ENCODE measurements at regions of chr1 and their contacts with region 1.

Region 1: GRCh38 chr1:28581536-28582247 is 10.4 kb upstream of the RAB42 start:
- DNase-seq: peak; percentile 88
- ATAC-seq: peak; percentile 88
- H3K4me3 ChIP-seq: peak overlapping the region; percentile 95 to 99 (median 96)
- H3K27ac ChIP-seq: peak overlapping the region; percentile 71
- H3K4me1 ChIP-seq: peaks cover 45% of the 10 kb centered on the region
- H3K27me3 ChIP-seq: peaks cover 0 to 3% of the 10 kb centered on the region in 2 experiments; a peak in 1 of 5 replicates
- CTCF ChIP-seq: peak; percentile 23
- EP300 ChIP-seq: no peak
- POLR2A ChIP-seq: peak; percentile 100
- RAD21 ChIP-seq: peak; percentile 62

Region 2: DNA sequence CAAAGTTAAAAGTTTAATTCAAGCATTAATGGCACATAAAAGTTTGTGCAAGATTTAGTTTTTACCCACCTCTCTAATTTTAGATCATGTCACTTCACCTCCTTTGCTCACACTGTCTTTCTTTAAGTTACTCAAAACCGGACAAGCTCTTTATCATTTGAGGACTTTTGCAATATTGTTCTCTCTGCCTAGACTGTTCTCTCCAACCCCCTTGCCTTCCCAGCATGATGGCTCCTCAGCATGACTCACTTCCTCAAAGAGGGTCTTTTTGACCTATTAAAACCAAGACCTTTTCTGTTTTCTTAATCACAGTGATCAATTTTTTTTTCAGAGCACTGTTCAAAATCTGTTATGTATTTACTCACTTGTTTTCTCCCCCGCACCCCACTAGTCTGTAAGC is 560.6 kb before region 1 on chr1:
- CTCF ChIA-PET with region 1: no interaction called
- POLR2A ChIA-PET with region 1: no interaction called
- in situ Hi-C with region 1: no loop called
- intact Hi-C with region 1: no loop called
- DNase-seq: no peak
- ATAC-seq: no peak
- H3K4me3 ChIP-seq: no peak overlapping the region
- H3K27ac ChIP-seq: no peak overlapping the region
- H3K4me1 ChIP-seq: no peaks in the 10 kb centered on the region
- H3K27me3 ChIP-seq: no peaks in the 10 kb centered on the region
- CTCF ChIP-seq: no peak
- EP300 ChIP-seq: no peak
- POLR2A ChIP-seq: no peak
- RAD21 ChIP-seq: no peak

Region 3: GRCh38 chr1:28248283-28249012 is 333.2 kb before region 1 on chr1:
- CTCF ChIA-PET with region 1: no interaction called
- POLR2A ChIA-PET with region 1: interaction called, 13 read pairs
- in situ Hi-C with region 1: loop called (anchors 25 kb)
- intact Hi-C with region 1: no loop called
- DNase-seq: peak; percentile 61
- ATAC-seq: peak; percentile 44
- H3K4me3 ChIP-seq: peak overlapping the region; percentile 54 to 78 (median 75)
- H3K27ac ChIP-seq: peak overlapping the region; percentile 75
- H3K4me1 ChIP-seq: peaks cover 53% of the 10 kb centered on the region
- H3K27me3 ChIP-seq: no peaks in the 10 kb centered on the region
- CTCF ChIP-seq: peak; percentile 89
- EP300 ChIP-seq: no peak
- POLR2A ChIP-seq: no peak
- RAD21 ChIP-seq: peak; percentile 83

Region 4: DNA sequence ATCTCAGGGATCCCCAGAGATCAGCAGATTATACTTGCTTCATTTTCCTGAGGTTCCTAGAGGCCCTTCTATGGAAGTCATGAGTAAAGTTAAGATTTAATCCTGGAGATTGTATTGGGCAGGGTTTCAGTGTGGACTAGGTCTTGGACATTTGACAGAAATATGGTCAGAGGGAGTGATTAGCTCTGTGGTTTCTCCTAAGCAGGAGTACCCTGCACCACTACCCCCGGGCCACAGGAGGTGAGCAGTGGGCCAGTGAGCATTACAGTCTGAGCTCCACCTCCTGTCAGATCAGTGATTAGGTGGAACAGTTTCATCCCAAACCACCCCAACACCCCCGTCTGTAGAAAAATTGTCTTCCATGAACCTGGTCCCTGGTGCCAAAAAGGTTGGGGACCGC is 169.0 kb before region 1 on chr1:
- CTCF ChIA-PET with region 1: no interaction called
- POLR2A ChIA-PET with region 1: no interaction called
- in situ Hi-C with region 1: no loop called
- intact Hi-C with region 1: no loop called
- DNase-seq: no peak
- ATAC-seq: peak; percentile 69
- H3K4me3 ChIP-seq: no peak overlapping the region
- H3K27ac ChIP-seq: no peak overlapping the region
- H3K4me1 ChIP-seq: peaks cover 24% of the 10 kb centered on the region
- H3K27me3 ChIP-seq: no peaks in the 10 kb centered on the region
- CTCF ChIP-seq: no peak
- EP300 ChIP-seq: no peak
- POLR2A ChIP-seq: no peak
- RAD21 ChIP-seq: no peak

Region 5: DNA sequence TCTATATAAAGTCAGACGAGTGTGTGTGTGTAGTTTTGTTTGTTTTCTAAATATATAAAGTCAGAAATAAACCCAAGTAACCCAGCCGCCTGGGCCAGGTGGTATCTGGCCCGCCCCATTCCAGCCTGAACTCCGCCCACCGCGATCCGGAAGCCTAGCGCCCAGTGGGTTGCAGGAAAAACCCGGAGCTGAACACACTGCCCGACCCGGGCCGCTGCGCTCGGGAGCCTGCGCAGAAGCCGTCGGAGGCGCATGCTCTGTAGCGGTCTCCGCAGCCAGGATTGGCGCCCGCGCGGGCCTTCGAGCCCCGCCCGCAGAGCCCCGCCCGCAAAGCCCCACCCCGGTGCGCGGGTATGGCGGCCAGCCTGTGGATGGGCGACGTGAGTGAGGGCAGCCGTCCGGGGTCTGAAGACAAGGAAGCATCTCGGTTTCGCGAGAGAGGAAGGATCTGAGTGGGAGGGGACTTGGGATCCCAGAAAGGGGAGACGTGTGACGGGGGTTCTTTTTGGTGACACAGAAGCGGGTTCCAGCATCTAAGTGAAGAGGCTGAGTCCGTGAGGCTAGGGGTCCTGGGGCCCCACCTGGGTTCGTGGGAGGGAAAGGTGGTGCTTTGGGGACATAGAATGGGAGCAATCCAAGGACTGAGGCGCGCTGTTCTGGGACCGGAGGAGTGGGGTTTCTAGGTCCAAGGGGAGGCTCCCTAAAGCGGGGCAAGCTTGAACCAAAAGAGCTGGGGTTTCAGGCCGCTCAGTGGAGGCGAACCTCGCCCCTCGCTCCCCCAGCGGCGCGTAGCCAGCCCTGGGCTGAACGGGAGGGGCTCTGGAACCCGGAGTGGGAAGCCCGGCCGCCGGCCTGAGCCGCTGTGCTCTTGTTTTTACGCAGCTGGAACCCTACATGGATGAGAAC is 28.7 kb before region 1 on chr1 and contains the start of gene TRNAU1AP:
- CTCF ChIA-PET with region 1: no interaction called
- POLR2A ChIA-PET with region 1: interaction called, 57 read pairs
- in situ Hi-C with region 1: no loop called
- intact Hi-C with region 1: loop called (anchors 2 kb)
- DNase-seq: peak; percentile 90
- ATAC-seq: peak; percentile 94
- H3K4me3 ChIP-seq: peak within 1 kb of the TSS; percentile 67 to 92 (median 84)
- H3K27ac ChIP-seq: peak within 1 kb of the TSS; percentile 58
- H3K4me1 ChIP-seq: peaks cover 26% of the 10 kb centered on the region
- H3K27me3 ChIP-seq: no peaks in the 10 kb centered on the region; a peak in 1 of 5 replicates
- CTCF ChIP-seq: no peak; the same call in 1 of the 2 replicates
- EP300 ChIP-seq: peak in 1 of 2 experiments; percentile 56; a peak in 2 of 4 replicates
- POLR2A ChIP-seq: peak; percentile 48 to 81
- RAD21 ChIP-seq: peak; percentile 23; the same call in 1 of the 2 replicates
- total RNA-seq, gene TRNAU1AP: 28.3 and 29.0 TPM in 2 replicates

Region 6: GRCh38 chr1:28591708-28592320 is 10.1 kb after region 1 on chr1 and contains the start of gene RAB42:
- CTCF ChIA-PET with region 1: no interaction called
- POLR2A ChIA-PET with region 1: interaction called, 139 read pairs
- in situ Hi-C with region 1: no loop called
- intact Hi-C with region 1: no loop called
- DNase-seq: peak; percentile 84
- ATAC-seq: peak; percentile 87
- H3K4me3 ChIP-seq: peak within 1 kb of the TSS; percentile 70 to 91 (median 72)
- H3K27ac ChIP-seq: peak within 1 kb of the TSS; percentile 91
- H3K4me1 ChIP-seq: peaks cover 79% of the 10 kb centered on the region
- H3K27me3 ChIP-seq: no peaks in the 10 kb centered on the region; a peak in 1 of 5 replicates
- CTCF ChIP-seq: no peak
- EP300 ChIP-seq: peak in 1 of 2 experiments; percentile 47; a peak in 1 of 4 replicates
- POLR2A ChIP-seq: peak; percentile 54 to 73; a peak in 3 of 4 replicates
- RAD21 ChIP-seq: peak; percentile 28; the same call in 1 of the 2 replicates
- total RNA-seq, gene RAB42: 10.3 and 10.4 TPM in 2 replicates

Region 7: DNA sequence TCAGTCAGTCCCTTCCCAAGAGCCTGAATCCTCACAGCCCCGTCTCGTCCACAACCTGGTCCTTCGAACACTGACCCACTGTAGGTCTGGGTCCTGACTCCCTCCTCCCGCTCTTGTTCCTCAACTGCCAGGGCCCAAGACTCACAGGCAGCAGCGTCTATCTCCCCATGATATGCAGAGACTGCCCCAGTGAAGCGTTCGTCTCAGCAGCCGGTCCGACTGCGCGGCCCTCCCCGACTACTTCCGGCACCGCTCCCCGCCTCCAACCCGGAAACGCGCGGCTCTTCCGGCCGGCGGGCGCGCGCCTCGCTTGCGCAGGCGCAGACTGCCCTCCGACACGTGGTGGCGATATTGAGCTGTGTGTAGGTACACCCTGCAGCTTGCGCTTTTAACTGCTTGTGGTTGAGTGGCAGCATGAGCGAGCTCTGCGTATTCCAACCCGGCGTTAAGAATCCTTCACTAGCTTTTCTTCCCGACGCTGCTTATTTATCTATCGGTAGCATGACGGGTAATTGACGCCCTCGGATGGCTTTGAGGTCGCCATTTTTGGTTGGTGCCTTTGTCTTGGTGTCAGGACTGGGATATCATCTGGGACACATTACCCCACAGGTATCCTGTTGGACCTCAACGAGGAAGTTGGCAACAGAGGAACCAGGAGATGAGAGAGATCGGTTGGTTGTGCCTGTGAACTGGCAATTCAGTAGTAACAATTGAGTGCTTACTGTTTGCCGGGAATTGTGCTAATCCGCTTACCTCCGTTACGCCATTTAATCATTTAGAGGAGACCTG is 61.3 kb after region 1 on chr1 and contains the start of gene TAF12:
- CTCF ChIA-PET with region 1: no interaction called
- POLR2A ChIA-PET with region 1: interaction called, 44 read pairs
- in situ Hi-C with region 1: no loop called
- intact Hi-C with region 1: no loop called
- DNase-seq: peak; percentile 90
- ATAC-seq: peak; percentile 90
- H3K4me3 ChIP-seq: peak within 1 kb of the TSS; percentile 90 to 99 (median 91)
- H3K27ac ChIP-seq: peak within 1 kb of the TSS; percentile 87
- H3K4me1 ChIP-seq: peaks cover 56% of the 10 kb centered on the region
- H3K27me3 ChIP-seq: no peaks in the 10 kb centered on the region; a peak in 1 of 5 replicates
- CTCF ChIP-seq: peak; percentile 88
- EP300 ChIP-seq: peak in 1 of 2 experiments; percentile 28; a peak in 1 of 4 replicates
- POLR2A ChIP-seq: peak; percentile 97 to 99
- RAD21 ChIP-seq: peak; percentile 60
- total RNA-seq, gene TAF12: 17.1 and 24.2 TPM in 2 replicates

Region 8: GRCh38 chr1:28668191-28668955 is 86.7 kb after region 1 on chr1 and contains the start of gene GMEB1:
- CTCF ChIA-PET with region 1: no interaction called
- POLR2A ChIA-PET with region 1: interaction called, 12 read pairs
- in situ Hi-C with region 1: no loop called
- intact Hi-C with region 1: no loop called
- DNase-seq: peak; percentile 73
- ATAC-seq: peak; percentile 80
- H3K4me3 ChIP-seq: peak within 1 kb of the TSS; percentile 81 to 97 (median 92)
- H3K27ac ChIP-seq: peak within 1 kb of the TSS; percentile 97
- H3K4me1 ChIP-seq: peaks cover 39% of the 10 kb centered on the region
- H3K27me3 ChIP-seq: peaks cover 0 to 4% of the 10 kb centered on the region in 2 experiments; a peak in 2 of 5 replicates
- CTCF ChIP-seq: no peak
- EP300 ChIP-seq: no peak
- POLR2A ChIP-seq: peak in 1 of 2 experiments; percentile 39; a peak in 2 of 4 replicates
- RAD21 ChIP-seq: no peak
- total RNA-seq, gene GMEB1: 6.0 and 7.4 TPM in 2 replicates

Measured in HepG2 (cell line).